HepG2 (cell line): ENCODE measurements at regions of chr1 and their contacts with region 1.

Region 1: GRCh38 chr1:205711104-205712020 is 31.1 kb upstream of the SLC45A3 start:
- DNase-seq: peak; percentile 75
- ATAC-seq: peak; percentile 79
- H3K4me3 ChIP-seq: no peak overlapping the region
- H3K27ac ChIP-seq: peak overlapping the region; percentile 15
- H3K4me1 ChIP-seq: peaks cover 91% of the 10 kb centered on the region
- H3K27me3 ChIP-seq: no peaks in the 10 kb centered on the region
- CTCF ChIP-seq: peak; percentile 93
- EP300 ChIP-seq: no peak
- POLR2A ChIP-seq: no peak
- RAD21 ChIP-seq: peak; percentile 81

Region 2: DNA sequence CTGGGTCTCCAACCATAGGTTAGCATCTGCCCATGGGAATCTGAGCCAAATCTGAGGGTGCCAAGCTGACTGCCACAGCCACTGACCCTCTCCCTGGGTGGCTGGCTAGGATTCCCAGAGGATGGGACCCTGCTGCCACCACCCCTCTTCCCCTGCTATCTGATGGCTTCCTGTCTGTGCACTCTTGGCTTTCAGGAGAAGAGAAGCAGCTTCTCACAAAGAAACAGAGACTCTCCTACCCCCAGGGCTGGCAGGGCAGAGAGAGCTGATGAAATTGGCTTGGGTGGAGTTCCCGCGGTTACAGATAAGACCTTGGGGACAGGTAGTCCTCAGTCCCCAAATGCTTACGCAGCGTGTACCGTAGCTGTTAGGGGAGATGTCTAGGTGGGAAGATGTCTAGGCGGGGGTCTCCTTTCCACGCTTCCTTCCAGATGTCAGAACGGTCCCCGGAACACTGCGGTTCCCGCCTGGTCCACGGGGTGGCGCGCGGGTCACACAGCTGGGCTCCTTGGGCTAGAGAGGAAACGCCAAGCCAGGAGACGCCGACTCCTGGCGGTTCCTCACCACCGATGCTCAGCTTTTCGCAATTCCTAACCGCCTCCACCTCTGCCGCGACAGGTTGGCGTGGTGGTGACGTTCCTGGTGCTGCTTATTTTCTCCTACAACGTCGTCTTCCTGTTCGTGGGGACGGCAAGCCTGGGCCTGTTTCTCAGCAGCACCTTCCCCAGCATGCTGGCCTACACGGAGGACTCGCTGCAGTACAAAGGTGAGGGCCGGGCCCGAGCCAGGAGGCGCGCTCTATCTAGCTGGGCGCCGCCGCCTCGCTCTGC is 119.6 kb before region 1 on chr1:
- CTCF ChIA-PET with region 1: interaction called, 7 read pairs
- POLR2A ChIA-PET with region 1: interaction called, 3 read pairs
- in situ Hi-C with region 1: loop called (anchors 5 kb)
- intact Hi-C with region 1: loop called (anchors 2 kb)
- DNase-seq: peak; percentile 73
- ATAC-seq: peak; percentile 86
- H3K4me3 ChIP-seq: peak overlapping the region; percentile 59 to 85 (median 68); a peak in 5 of 6 replicates
- H3K27ac ChIP-seq: peak overlapping the region; percentile 57
- H3K4me1 ChIP-seq: peaks cover 36% of the 10 kb centered on the region
- H3K27me3 ChIP-seq: 0 out of 5 replicates have a peak, but pooled peaks cover 0 to 7% of the 10 kb centered on the region in 2 experiments
- CTCF ChIP-seq: peak; percentile 100
- EP300 ChIP-seq: no peak
- POLR2A ChIP-seq: peak in 1 of 2 experiments; percentile 39; a peak in 1 of 4 replicates
- RAD21 ChIP-seq: peak; percentile 99

Region 3: GRCh38 chr1:205604825-205605505 is 106.4 kb before region 1 on chr1:
- CTCF ChIA-PET with region 1: no interaction called
- POLR2A ChIA-PET with region 1: no interaction called
- in situ Hi-C with region 1: no loop called
- intact Hi-C with region 1: no loop called
- DNase-seq: no peak
- ATAC-seq: no peak
- H3K4me3 ChIP-seq: no peak overlapping the region
- H3K27ac ChIP-seq: no peak overlapping the region
- H3K4me1 ChIP-seq: peaks cover 25% of the 10 kb centered on the region
- H3K27me3 ChIP-seq: no peaks in the 10 kb centered on the region
- CTCF ChIP-seq: no peak
- EP300 ChIP-seq: no peak
- POLR2A ChIP-seq: no peak
- RAD21 ChIP-seq: no peak

Region 4: DNA sequence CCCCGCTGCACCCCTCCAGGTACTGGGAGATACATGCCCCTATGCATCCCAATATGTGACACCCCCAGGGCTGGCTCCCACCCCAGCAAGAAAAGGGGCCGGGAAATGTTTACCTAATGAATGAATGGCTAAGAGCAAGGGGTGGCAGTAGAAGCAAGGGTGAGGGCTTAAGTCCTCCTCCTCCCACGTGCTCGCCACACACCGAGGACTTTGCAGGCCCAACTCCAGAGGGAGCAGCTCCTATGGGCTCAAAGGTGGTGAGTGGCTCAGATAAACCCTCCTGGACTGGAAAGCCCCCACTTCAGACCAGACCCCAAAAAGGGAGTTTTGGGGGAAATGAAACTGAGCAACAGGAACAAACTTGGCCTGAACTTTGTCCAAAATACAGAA is 42.4 kb before region 1 on chr1:
- CTCF ChIA-PET with region 1: interaction called, 4 read pairs
- POLR2A ChIA-PET with region 1: no interaction called
- in situ Hi-C with region 1: no loop called
- intact Hi-C with region 1: loop called (anchors 2 kb)
- DNase-seq: peak; percentile 25
- ATAC-seq: peak; percentile 62
- H3K4me3 ChIP-seq: no peak overlapping the region
- H3K27ac ChIP-seq: no peak overlapping the region
- H3K4me1 ChIP-seq: peaks cover 99% of the 10 kb centered on the region
- H3K27me3 ChIP-seq: no peaks in the 10 kb centered on the region
- CTCF ChIP-seq: peak; percentile 66
- EP300 ChIP-seq: no peak
- POLR2A ChIP-seq: no peak
- RAD21 ChIP-seq: peak; percentile 43; the same call in 1 of the 2 replicates

Region 5: DNA sequence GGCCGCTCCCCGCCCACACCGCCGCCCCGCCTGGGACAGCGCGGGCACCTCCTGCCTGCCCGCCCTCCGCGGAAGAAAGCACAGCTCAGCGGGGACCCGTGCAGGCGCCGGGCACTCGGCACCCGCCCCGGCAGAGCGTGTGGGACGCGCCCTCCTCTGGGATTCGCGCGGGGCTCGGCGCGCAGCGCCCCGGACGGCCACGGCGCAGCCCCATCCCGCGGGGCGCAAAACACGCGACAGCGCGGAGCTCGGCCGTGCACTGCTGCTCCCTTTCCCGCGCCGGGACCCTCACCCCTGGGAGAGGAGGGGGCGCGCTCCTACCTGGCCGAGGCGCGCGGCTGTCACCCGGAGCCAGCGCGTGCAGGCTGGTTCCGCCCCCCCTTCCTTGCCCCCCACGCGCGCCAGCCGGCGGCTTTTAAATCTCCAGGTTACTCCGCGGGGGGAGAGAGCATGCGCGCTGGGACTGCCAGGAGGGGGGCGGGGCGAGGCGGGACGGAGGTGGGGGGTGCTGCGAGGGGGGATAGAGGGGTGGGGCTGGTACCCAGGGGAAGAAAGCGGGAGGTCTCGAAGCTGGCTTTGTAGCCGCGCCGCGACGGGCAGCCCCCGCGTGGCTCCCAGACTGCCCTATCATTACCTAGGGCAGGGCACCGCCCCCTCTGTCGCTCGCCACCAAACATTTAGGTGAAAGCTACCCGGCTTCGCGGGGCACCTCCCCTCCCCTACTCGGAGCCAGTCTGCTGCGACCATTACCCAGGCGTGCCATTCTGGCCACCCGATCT is 31.1 kb before region 1 on chr1 and contains the start of gene SLC45A3:
- CTCF ChIA-PET with region 1: no interaction called
- POLR2A ChIA-PET with region 1: interaction called, 16 read pairs
- in situ Hi-C with region 1: no loop called
- intact Hi-C with region 1: no loop called
- DNase-seq: no peak
- ATAC-seq: peak; percentile 33
- H3K4me3 ChIP-seq: peak within 1 kb of the TSS; percentile 62 to 79 (median 74)
- H3K27ac ChIP-seq: no peak within 1 kb of the TSS
- H3K4me1 ChIP-seq: peaks cover 60% of the 10 kb centered on the region
- H3K27me3 ChIP-seq: peaks cover 0 to 2% of the 10 kb centered on the region in 2 experiments; a peak in 2 of 5 replicates
- CTCF ChIP-seq: no peak
- EP300 ChIP-seq: no peak
- POLR2A ChIP-seq: no peak
- RAD21 ChIP-seq: no peak
- total RNA-seq, gene SLC45A3: 1.9 and 3.4 TPM in 2 replicates